PC-9 (cell line): ENCODE measurements at regions of chr22 and their contacts with region 1.

Region 1: DNA sequence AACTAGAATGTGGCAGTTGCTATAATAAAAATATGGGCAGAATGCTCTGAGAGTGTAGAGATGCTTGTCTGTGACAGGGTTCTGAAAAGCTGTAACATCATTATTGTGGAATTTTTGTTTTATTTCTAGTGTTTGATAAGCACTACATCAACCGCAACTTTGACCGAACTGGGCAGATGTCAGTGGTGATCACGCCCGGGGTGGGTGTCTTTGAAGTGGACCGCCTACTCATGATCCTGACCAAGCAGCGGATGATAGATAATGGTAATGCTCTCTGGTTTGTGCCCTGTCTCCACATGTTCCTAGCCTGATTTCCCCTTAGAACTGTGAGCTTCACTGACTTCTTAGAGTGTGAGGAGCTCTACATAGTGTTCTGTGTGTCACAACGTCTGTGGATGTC is 48.8 kb downstream of the DEPDC5 start:
- DNase-seq: no peak
- H3K4me3 ChIP-seq: no peak overlapping the region
- H3K27ac ChIP-seq: no peak overlapping the region
- H3K4me1 ChIP-seq: peaks cover 17% of the 10 kb centered on the region
- H3K27me3 ChIP-seq: no peaks in the 10 kb centered on the region
- CTCF ChIP-seq: no peak

Region 2: DNA sequence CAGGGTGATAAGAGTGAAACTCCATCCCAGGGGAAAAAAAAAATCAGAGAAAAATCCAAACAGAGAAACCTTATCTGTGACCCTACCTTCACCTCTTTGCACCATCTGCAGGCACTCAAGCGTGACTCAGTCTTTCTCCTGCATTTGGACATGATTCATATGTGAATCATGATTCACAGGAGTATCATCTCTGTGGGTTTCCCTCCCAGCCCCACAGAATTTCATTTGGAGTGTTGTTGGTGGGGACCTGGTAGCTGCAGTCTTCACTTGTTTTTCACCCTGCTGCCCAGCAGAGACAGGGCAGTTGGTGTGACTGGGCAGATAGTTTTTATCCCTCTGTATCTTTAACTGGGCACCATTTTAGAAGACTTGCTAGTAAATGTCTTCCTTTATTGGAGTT is 26.9 kb after region 1 on chr22:
- CTCF ChIA-PET with region 1: no interaction called
- POLR2A ChIA-PET with region 1: no interaction called
- intact Hi-C with region 1: loop called (anchors 2 kb)
- DNase-seq: peak; percentile 72 to 94
- H3K4me3 ChIP-seq: no peak overlapping the region
- H3K27ac ChIP-seq: peak overlapping the region; percentile 92
- H3K4me1 ChIP-seq: peaks cover 24% of the 10 kb centered on the region
- H3K27me3 ChIP-seq: no peaks in the 10 kb centered on the region
- CTCF ChIP-seq: no peak

Region 3: GRCh38 chr22:31857247-31857646 is 54.7 kb after region 1 on chr22:
- CTCF ChIA-PET with region 1: no interaction called
- POLR2A ChIA-PET with region 1: interaction called, 23 read pairs
- intact Hi-C with region 1: no loop called
- DNase-seq: no peak
- H3K4me3 ChIP-seq: no peak overlapping the region
- H3K27ac ChIP-seq: no peak overlapping the region
- H3K4me1 ChIP-seq: no peaks in the 10 kb centered on the region
- H3K27me3 ChIP-seq: no peaks in the 10 kb centered on the region
- CTCF ChIP-seq: no peak